Dendritic cell treated with granulocyte-macrophage colony-stimulating factor and Interleukin-4, amounts not matched to agents 40 ng/mL and 50 ng/mL, for 4 days (primary cell): ENCODE measurements at regions of chr5 and their contacts with region 1.

Region 1: DNA sequence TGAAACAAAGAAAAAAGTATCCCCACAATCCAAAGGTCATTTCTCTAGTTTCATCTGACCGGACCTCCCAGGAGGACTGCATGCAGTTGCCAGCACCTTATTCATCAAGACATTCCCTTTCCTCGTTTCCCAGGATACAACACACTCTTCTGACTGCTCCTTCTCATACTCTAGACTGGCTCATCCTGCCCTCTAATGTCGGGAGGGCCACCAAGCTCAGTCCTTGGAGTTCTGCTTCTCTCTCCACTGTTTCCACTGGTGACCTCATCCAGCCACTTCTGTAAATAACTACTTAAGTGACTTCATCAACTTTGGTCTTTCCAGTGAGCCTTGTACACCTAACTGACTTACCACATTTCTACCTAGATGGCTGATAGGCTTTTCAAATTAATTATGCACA is 179.1 kb downstream of the EPB41L4A start:
- H3K4me3 Mint-ChIP-seq: no peak overlapping the region
- H3K27ac Mint-ChIP-seq: no peak overlapping the region
- H3K4me1 Mint-ChIP-seq: no peaks in the 10 kb centered on the region
- H3K27me3 Mint-ChIP-seq: no peaks in the 10 kb centered on the region

Region 2: DNA sequence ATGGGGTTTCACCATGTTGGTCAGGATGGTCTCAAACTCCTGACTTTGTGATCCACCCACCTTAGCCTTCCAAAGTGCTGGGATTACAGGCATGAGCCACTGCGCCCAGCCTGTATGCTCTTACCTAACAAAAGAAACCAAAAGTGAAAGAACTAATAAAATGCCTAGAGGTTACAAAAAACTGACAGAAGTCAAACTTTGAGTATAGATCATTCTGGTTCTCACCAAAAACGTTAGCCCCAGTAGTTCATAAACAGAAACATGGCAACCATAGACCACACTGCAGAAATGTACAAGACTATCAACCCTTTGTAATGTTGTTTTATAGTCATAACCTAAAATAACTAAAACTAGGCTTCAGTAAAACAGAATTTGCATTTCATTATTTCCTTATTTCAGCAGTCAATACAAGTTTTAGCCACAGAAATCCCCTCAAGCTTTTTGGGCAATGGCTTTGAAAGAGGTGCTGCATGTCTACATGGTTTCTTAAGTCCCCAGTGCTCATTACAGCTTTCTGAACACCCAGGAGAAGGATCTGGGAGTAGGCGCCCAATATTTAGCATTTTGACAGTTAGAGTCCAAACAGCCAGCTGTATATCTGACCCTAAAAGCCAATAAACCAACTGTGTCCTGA is 106.5 kb after region 1 on chr5:
- intact Hi-C with region 1: loop called (anchors 10 kb)
- H3K4me3 Mint-ChIP-seq: no peak overlapping the region
- H3K27ac Mint-ChIP-seq: no peak overlapping the region
- H3K4me1 Mint-ChIP-seq: no peaks in the 10 kb centered on the region
- H3K27me3 Mint-ChIP-seq: no peaks in the 10 kb centered on the region